Activated CD8-positive, alpha-beta memory T cell treated with anti-CD3 and anti-CD28 coated beads, Interleukin-2, amount 10 ng/mL, durations not matched to agents 7 days and 5 days (primary cell): ENCODE measurements at regions of chr3 and their contacts with region 1.

Region 1: GRCh38 chr3:67384760-67385397 is 269.5 kb downstream of the SUCLG2 start:
- DNase-seq: peak; percentile 58
- ATAC-seq: peak; percentile 45
- H3K4me3 Mint-ChIP-seq: no peak overlapping the region
- H3K27ac Mint-ChIP-seq: no peak overlapping the region
- H3K4me1 Mint-ChIP-seq: peaks cover 13% of the 10 kb centered on the region
- H3K27me3 Mint-ChIP-seq: no peaks in the 10 kb centered on the region

Region 2: DNA sequence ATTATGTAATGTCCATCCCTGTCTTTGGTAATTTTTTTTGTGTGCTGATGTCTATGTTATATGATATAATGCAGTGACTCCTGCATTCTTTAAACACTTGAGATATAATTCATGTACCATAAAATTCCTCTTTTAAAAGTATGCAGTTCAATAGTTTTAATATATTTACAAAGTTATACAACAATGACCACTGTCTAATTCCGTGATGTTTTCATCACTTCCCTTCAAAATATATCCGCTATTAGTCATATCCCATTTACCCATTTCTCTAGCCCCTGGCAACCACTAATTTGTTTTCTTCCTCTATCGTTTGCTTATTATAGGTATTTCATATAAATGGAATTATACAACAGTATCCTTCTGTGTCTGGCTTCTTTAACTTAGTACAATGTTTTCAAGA is 334.5 kb after region 1 on chr3:
- CTCF ChIA-PET with region 1: no interaction called
- DNase-seq: no peak
- ATAC-seq: no peak
- H3K4me3 Mint-ChIP-seq: no peak overlapping the region
- H3K27ac Mint-ChIP-seq: no peak overlapping the region
- H3K4me1 Mint-ChIP-seq: no peaks in the 10 kb centered on the region
- H3K27me3 Mint-ChIP-seq: no peaks in the 10 kb centered on the region

Region 3: GRCh38 chr3:67790043-67790442 is 405.2 kb after region 1 on chr3:
- CTCF ChIA-PET with region 1: interaction called, 21 read pairs
- DNase-seq: peak; percentile 66
- ATAC-seq: peak; percentile 76
- H3K4me3 Mint-ChIP-seq: no peak overlapping the region
- H3K27ac Mint-ChIP-seq: no peak overlapping the region
- H3K4me1 Mint-ChIP-seq: no peaks in the 10 kb centered on the region
- H3K27me3 Mint-ChIP-seq: no peaks in the 10 kb centered on the region